ENCODE measurements at regions of chr13 and their contacts with region 1.

Region 1: GRCh38 chr13:21014502-21015170 is 46.8 kb downstream of the LATS2 start:
- DNase-seq: no peak
- H3K4me3 ChIP-seq: no peak overlapping the region
- H3K4me3 Mint-ChIP-seq: no peak overlapping the region
- H3K27ac ChIP-seq: peak overlapping the region in 1 of 2 donors; percentile 27
- H3K27ac Mint-ChIP-seq: peak overlapping the region in 6 of 7 donors; percentile 1 to 81 (median 69)
- H3K4me1 ChIP-seq: peaks cover 32 to 35% of the 10 kb centered on the region in 2 donors
- H3K4me1 Mint-ChIP-seq: peaks cover 49% of the 10 kb centered on the region
- H3K27me3 ChIP-seq: no peaks in the 10 kb centered on the region
- H3K27me3 Mint-ChIP-seq: no peaks in the 10 kb centered on the region
- CTCF ChIP-seq: no peak

Region 2: DNA sequence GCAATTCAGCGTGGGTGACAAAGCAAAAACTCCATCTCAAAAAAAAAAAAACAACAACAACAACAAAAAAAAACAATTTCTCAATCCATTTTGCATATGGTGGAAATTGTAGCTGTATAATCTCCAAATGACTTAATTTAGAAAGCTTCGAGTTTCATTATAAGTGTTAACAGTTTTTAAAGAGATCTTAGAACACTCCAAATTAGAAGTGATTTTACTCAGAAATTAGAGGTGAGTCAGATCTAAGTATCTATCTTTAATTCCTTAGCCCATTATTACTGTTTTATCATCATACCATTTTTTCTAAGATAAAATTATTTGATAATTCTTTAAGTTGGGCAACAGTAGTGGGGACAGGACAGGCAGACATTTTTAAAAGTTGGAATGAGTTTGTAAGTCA is 995.6 kb before region 1 on chr13:
- intact Hi-C with region 1: no loop called
- DNase-seq: no peak
- H3K4me3 ChIP-seq: no peak overlapping the region
- H3K4me3 Mint-ChIP-seq: no peak overlapping the region
- H3K27ac ChIP-seq: no peak overlapping the region
- H3K27ac Mint-ChIP-seq: peak overlapping the region in 1 of 7 donors; percentile 19
- H3K4me1 ChIP-seq: no peaks in the 10 kb centered on the region
- H3K4me1 Mint-ChIP-seq: no peaks in the 10 kb centered on the region
- H3K27me3 ChIP-seq: no peaks in the 10 kb centered on the region
- H3K27me3 Mint-ChIP-seq: no peaks in the 10 kb centered on the region
- CTCF ChIP-seq: no peak

Region 3: GRCh38 chr13:20814224-20814910 is 200.3 kb before region 1 on chr13:
- intact Hi-C with region 1: no loop called
- DNase-seq: no peak
- H3K4me3 ChIP-seq: no peak overlapping the region
- H3K4me3 Mint-ChIP-seq: no peak overlapping the region
- H3K27ac ChIP-seq: no peak overlapping the region
- H3K27ac Mint-ChIP-seq: no peak overlapping the region
- H3K4me1 ChIP-seq: no peaks in the 10 kb centered on the region
- H3K4me1 Mint-ChIP-seq: peaks cover 2% of the 10 kb centered on the region
- H3K27me3 ChIP-seq: no peaks in the 10 kb centered on the region
- H3K27me3 Mint-ChIP-seq: no peaks in the 10 kb centered on the region
- CTCF ChIP-seq: no peak

Region 4: DNA sequence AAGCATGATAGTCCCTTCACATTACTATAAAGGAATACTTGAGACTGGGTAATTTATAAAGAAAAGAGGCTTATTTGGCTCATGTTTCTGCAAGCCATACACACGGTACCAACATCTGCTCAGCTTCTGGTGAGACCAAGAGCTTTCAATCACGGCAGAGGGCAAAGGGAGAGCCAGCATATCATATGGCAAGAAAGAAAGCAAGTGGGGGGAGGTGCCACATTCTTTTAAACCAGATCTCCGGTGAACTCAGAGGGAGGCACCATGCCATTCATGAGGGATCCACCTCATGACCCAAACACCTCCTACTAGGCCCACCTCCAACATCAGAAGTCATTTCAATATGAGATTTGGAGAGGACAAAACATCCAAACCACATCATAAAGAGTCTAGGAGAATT is 132.4 kb before region 1 on chr13:
- intact Hi-C with region 1: no loop called
- DNase-seq: no peak
- H3K4me3 ChIP-seq: no peak overlapping the region
- H3K4me3 Mint-ChIP-seq: no peak overlapping the region
- H3K27ac ChIP-seq: no peak overlapping the region
- H3K27ac Mint-ChIP-seq: peak overlapping the region in 2 of 7 donors; percentile 50 to 79
- H3K4me1 ChIP-seq: peaks cover 2 to 13% of the 10 kb centered on the region in 2 donors
- H3K4me1 Mint-ChIP-seq: peaks cover 24% of the 10 kb centered on the region
- H3K27me3 ChIP-seq: no peaks in the 10 kb centered on the region
- H3K27me3 Mint-ChIP-seq: no peaks in the 10 kb centered on the region
- CTCF ChIP-seq: no peak

Region 5: DNA sequence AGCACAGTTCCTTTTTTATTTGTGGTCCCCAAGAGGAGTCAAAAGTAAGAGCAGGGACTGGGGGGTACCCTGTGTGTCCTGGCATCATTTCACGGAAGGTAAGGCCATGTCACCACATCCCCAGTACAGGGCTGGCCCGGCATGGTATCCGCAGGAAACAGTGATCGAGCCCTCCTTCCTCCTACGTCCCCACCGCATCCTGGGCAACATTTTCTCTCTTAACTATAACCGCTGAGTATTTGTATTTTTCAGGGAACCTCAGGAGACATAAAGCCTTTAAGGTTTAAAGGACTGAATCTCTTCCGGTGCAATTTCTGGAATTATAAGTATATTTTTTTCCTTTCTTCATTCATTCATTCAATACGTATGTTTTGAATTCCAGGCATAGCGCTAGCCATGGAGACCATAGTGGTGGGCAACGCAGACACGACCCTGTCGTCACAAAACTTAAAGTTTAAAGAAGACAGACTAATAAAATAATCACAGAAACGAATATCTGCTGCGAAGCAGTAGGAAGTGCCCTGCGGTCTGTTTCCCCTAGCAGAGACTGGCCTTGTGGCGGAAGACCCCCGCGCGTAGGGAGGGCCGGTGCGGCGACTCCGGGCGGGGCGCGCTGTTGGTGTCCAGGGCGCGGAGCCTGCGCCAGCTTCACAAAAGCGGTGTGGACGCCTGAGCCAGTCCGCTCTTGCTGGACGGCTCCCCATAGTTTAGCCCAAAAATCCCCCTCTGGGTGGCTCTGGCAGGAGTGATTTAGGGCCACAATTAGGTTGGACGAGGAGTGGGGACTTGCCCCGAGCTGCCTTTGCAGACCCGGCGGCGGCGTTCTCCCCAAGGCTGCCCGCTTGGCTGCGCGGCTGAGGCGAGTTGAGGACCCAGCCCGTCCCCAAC is 60.6 kb after region 1 on chr13:
- intact Hi-C with region 1: loop called in 1 of 2 experiments (anchors 5 kb)
- DNase-seq: peak in 2 of 3 donors; percentile 26 to 40
- H3K4me3 ChIP-seq: peak overlapping the region; percentile 50 to 88 (median 71)
- H3K4me3 Mint-ChIP-seq: peak overlapping the region; percentile 84 to 91
- H3K27ac ChIP-seq: peak overlapping the region; percentile 19 to 64
- H3K27ac Mint-ChIP-seq: peak overlapping the region; percentile 47 to 82 (median 63)
- H3K4me1 ChIP-seq: peaks cover 38 to 54% of the 10 kb centered on the region in 2 donors
- H3K4me1 Mint-ChIP-seq: peaks cover 52% of the 10 kb centered on the region
- H3K27me3 ChIP-seq: no peaks in the 10 kb centered on the region
- H3K27me3 Mint-ChIP-seq: peaks cover 0 to 3% (median 0%) of the 10 kb centered on the region in 3 donors
- CTCF ChIP-seq: no peak

Region 6: GRCh38 chr13:21310221-21310620 is 295.6 kb after region 1 on chr13:
- intact Hi-C with region 1: no loop called
- DNase-seq: no peak
- H3K4me3 ChIP-seq: no peak overlapping the region
- H3K4me3 Mint-ChIP-seq: no peak overlapping the region
- H3K27ac ChIP-seq: no peak overlapping the region
- H3K27ac Mint-ChIP-seq: no peak overlapping the region
- H3K4me1 ChIP-seq: no peaks in the 10 kb centered on the region
- H3K4me1 Mint-ChIP-seq: no peaks in the 10 kb centered on the region
- H3K27me3 ChIP-seq: no peaks in the 10 kb centered on the region
- H3K27me3 Mint-ChIP-seq: peaks cover 0 to 2% (median 1%) of the 10 kb centered on the region in 3 donors
- CTCF ChIP-seq: no peak